ENCODE measurements at regions of chr4 and their contacts with region 1.

Region 1: DNA sequence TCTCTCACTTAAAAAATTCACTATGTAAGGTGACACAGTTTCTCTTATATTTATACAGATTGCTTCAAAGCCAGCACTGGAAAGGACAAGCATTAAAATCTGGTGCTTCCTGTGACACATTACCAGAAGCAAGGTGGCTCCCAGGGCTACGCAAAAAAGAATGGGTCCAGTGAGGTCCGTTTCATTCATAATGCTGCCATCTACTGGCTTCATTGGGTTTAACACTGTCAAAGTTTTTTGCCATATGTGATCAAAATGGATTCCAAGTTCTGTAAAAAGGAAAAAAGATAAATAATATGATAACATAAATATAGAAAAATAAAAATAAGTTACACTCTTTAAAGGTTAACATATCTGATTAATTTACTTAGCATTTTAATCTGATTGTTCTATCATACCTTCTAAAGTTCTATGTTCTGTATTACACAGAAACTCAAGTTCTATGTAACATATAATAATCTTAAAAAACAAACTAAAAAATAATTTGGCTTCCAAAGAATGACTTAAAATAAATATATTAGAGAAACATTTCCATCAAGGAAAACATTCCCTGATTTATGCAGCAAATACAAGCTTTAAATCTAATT is 22.1 kb downstream of the YIPF7 start:
- DNase-seq: peak; percentile 13
- H3K4me3 Mint-ChIP-seq: no peak overlapping the region
- H3K27ac Mint-ChIP-seq: no peak overlapping the region
- H3K4me1 Mint-ChIP-seq: no peaks in the 10 kb centered on the region
- H3K27me3 Mint-ChIP-seq: no peaks in the 10 kb centered on the region

Region 2: GRCh38 chr4:43132010-43132582 is 1497.3 kb before region 1 on chr4:
- intact Hi-C with region 1: loop called (anchors 5 kb)
- DNase-seq: peak; percentile 11
- H3K4me3 Mint-ChIP-seq: no peak overlapping the region
- H3K27ac Mint-ChIP-seq: no peak overlapping the region
- H3K4me1 Mint-ChIP-seq: no peaks in the 10 kb centered on the region
- H3K27me3 Mint-ChIP-seq: no peaks in the 10 kb centered on the region

Region 3: GRCh38 chr4:44448548-44449461 is 180.6 kb before region 1 on chr4 and contains the start of gene KCTD8:
- intact Hi-C with region 1: loop called (anchors 1 kb)
- DNase-seq: peak; percentile 71
- H3K4me3 Mint-ChIP-seq: peak within 1 kb of the TSS; percentile 47
- H3K27ac Mint-ChIP-seq: no peak within 1 kb of the TSS
- H3K4me1 Mint-ChIP-seq: peaks cover 7% of the 10 kb centered on the region
- H3K27me3 Mint-ChIP-seq: peaks cover 39% of the 10 kb centered on the region
- total RNA-seq, gene KCTD8: not detected in 2 replicates

Region 4: GRCh38 chr4:44674471-44674870 is 45.1 kb after region 1 on chr4:
- intact Hi-C with region 1: no loop called
- DNase-seq: no peak
- H3K4me3 Mint-ChIP-seq: no peak overlapping the region
- H3K27ac Mint-ChIP-seq: no peak overlapping the region
- H3K4me1 Mint-ChIP-seq: peaks cover 11% of the 10 kb centered on the region
- H3K27me3 Mint-ChIP-seq: peaks cover 5% of the 10 kb centered on the region

Measured in activated T-helper 2 cell treated with anti-CD3 and anti-CD28 coated beads, Interferon-gamma antibody, Interleukin-2, Interleukin-4, amounts not matched to agents 10 μg/mL and 5 μg/mL and 100 μg/mL, durations not matched to agents 14 hours and 24 hours and 36 hours (primary cell).